ENCODE measurements at regions of chr1 and their contacts with region 1.

Region 1: DNA sequence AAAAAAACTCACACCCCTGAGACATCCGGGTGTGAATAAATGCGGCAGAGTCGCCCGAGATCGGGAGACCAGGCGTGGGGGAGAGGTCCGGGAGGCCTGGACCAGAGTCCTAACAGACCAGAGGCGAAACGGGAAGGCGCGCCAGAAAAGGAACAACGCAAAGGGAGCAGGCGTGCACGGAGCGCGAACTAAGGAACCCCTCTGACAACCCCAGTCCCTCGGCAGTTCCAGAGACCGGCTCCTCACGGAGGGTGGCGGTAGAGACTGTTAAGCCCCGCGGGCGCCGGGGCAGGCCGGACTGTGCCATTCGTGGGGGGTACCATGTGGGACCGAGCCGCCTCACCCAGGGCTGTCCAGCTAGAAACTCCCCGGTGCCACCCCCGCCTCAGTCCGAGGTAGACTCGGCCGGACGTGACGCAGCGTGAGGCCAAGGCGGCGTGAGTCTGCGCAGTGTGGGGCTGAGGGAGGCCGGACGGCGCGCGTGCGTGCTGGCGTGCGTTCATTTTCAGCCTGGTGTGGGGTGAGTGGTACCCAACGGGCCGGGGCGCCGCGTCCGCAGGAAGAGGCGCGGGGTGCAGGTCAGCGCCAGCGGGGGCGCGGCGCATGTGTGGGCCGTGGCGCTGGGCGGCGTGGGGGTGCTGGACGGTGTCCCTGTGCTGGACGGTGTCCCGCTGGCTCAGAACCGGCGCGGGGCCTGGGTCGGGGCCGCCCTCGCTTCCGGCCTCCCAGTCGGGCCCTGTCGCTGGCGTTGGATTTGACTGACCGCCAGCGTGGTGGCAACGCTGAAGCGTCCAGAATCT is at the start of gene PARK7:
- DNase-seq: peak; percentile 99 to 100 (median 100)
- ATAC-seq: peak; percentile 95
- H3K4me3 ChIP-seq: peak within 1 kb of the TSS; percentile 60 to 87
- H3K4me3 Mint-ChIP-seq: peak within 1 kb of the TSS; percentile 99
- H3K27ac ChIP-seq: peak within 1 kb of the TSS; percentile 76 to 92
- H3K27ac Mint-ChIP-seq: peak within 1 kb of the TSS; percentile 100
- H3K4me1 ChIP-seq: peaks cover 51% of the 10 kb centered on the region
- H3K4me1 Mint-ChIP-seq: peaks cover 62% of the 10 kb centered on the region
- H3K27me3 ChIP-seq: no peaks in the 10 kb centered on the region
- H3K27me3 Mint-ChIP-seq: no peaks in the 10 kb centered on the region
- CTCF ChIP-seq: peak; percentile 49
- total RNA-seq, gene PARK7: 67.9 to 70.0 TPM

Region 2: GRCh38 chr1:7783826-7784491 is 177.5 kb before region 1 on chr1 and contains the start of gene PER3:
- CTCF ChIA-PET with region 1: no interaction called
- POLR2A ChIA-PET with region 1: no interaction called
- intact Hi-C with region 1: loop called (anchors 2 to 10 kb)
- DNase-seq: peak; percentile 82 to 96 (median 89)
- ATAC-seq: peak; percentile 88
- H3K4me3 ChIP-seq: peak within 1 kb of the TSS; percentile 55 to 68
- H3K4me3 Mint-ChIP-seq: peak within 1 kb of the TSS; percentile 72
- H3K27ac ChIP-seq: peak within 1 kb of the TSS; percentile 76 to 88
- H3K27ac Mint-ChIP-seq: peak within 1 kb of the TSS; percentile 60
- H3K4me1 ChIP-seq: peaks cover 27% of the 10 kb centered on the region
- H3K4me1 Mint-ChIP-seq: peaks cover 30% of the 10 kb centered on the region
- H3K27me3 ChIP-seq: no peaks in the 10 kb centered on the region
- H3K27me3 Mint-ChIP-seq: no peaks in the 10 kb centered on the region
- CTCF ChIP-seq: no peak
- total RNA-seq, gene PER3: 8.7 to 10.2 TPM

Region 3: DNA sequence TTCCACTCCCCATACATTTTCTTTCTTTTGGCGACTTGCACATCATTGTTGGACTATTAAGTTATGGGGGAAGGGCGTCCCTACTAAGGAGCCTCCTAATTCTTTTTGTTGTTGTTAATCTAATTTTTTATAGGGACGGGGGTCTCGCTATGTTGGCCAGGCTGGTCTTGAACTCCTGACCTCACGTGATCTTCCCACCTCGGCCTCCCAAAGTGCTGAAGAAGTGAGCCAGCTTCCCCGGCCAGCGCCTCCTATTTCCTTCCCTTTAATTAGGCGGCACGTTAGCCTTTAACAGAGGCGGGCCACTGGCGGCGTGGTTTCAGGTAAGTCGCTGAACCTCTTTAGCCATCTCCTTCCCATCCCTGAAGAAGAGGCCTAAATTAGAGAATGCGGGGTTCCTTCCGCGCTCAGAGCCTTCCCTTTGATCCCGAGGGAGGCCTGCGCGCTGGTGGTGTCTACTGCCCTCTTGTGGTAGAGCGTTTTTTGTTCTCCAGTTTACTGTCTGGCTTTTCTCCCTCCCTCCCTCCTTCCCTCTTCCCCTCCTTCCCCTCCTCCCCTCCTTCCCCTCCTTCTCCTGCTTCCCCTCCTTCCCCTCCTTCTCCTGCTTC is 58.8 kb before region 1 on chr1:
- CTCF ChIA-PET with region 1: interaction called, 4 read pairs
- POLR2A ChIA-PET with region 1: no interaction called
- intact Hi-C with region 1: loop called in 1 of 2 experiments (anchors 5 kb)
- DNase-seq: peak in 8 of 9 experiments; percentile 31 to 84 (median 60)
- ATAC-seq: peak; percentile 69
- H3K4me3 ChIP-seq: peak overlapping the region; percentile 39 to 46
- H3K4me3 Mint-ChIP-seq: peak overlapping the region; percentile 65
- H3K27ac ChIP-seq: no peak overlapping the region
- H3K27ac Mint-ChIP-seq: no peak overlapping the region
- H3K4me1 ChIP-seq: peaks cover 4% of the 10 kb centered on the region
- H3K4me1 Mint-ChIP-seq: peaks cover 9% of the 10 kb centered on the region
- H3K27me3 ChIP-seq: no peaks in the 10 kb centered on the region
- H3K27me3 Mint-ChIP-seq: no peaks in the 10 kb centered on the region
- CTCF ChIP-seq: peak; percentile 53

Region 4: DNA sequence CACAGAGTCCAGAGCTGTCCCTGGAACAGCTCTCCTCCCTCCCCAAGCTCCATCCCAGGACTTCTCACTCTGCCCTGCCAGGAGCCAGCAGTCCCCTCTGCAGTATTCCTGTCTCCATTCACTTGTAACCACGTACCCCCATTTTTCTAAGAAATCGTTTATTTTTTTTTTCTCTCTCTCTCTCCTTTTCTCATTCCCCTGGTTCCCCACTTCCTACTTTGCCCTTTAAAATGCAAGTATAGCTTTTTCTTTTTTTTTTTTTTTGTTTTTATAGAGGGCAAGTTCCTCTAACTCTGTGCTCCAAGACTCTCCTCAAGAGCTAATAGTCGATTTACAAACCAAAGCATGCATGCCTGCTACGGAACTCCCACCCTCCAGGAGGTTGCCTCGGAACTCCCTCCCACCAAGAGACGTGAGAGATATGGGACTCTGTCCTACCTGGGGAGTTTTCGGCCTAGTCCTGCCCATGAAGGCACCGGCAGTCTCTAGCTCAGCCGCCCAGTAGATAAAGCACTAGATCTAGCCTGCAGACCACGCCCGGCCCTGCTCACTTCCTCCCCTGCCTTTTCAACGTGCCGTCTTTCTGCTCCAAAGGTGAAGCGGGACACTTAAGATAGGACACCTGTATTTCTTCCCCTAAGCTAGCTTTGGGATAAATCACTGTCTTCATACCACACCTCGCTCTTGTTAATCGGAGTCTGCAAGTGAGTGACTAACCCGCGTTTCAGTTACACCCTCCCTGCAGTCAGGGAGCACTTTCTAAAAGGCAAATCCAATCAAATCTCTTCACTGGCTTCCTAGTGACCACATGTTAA is 48.5 kb before region 1 on chr1:
- CTCF ChIA-PET with region 1: no interaction called
- POLR2A ChIA-PET with region 1: interaction called, 3 read pairs
- intact Hi-C with region 1: loop called in 1 of 2 experiments (anchors 10 kb)
- DNase-seq: peak in 2 of 9 experiments; percentile 20 to 25
- ATAC-seq: no peak
- H3K4me3 ChIP-seq: peak overlapping the region in 1 of 2 experiments; percentile 34
- H3K4me3 Mint-ChIP-seq: peak overlapping the region; percentile 74
- H3K27ac ChIP-seq: peak overlapping the region in 1 of 2 experiments; percentile 23
- H3K27ac Mint-ChIP-seq: peak overlapping the region; percentile 63
- H3K4me1 ChIP-seq: peaks cover 13% of the 10 kb centered on the region
- H3K4me1 Mint-ChIP-seq: peaks cover 31% of the 10 kb centered on the region
- H3K27me3 ChIP-seq: no peaks in the 10 kb centered on the region
- H3K27me3 Mint-ChIP-seq: no peaks in the 10 kb centered on the region
- CTCF ChIP-seq: no peak

Region 5: DNA sequence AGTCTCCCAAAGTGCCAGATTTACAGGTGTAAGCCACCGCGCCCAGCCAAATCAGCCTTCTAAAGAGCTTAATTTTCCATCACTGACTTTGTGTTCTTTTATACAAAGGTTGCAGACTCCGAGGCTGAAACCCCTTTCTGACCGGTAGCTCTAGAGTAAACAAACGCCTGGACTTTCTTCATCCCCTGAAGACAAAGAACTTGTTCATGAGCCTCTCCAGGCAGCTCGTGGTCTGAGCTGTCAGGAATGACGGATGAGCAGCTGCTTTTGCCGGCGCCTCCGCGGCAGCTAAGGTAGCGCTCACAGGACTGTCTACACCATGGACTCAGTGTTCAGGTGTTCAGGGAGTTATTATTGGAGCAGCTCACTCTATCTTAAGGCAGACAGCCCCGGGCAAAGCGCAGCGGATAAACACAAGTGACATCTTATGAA is 193.2 kb after region 1 on chr1:
- CTCF ChIA-PET with region 1: no interaction called
- POLR2A ChIA-PET with region 1: no interaction called
- intact Hi-C with region 1: loop called in 1 of 2 experiments (anchors 5 kb)
- DNase-seq: no peak
- ATAC-seq: no peak
- H3K4me3 ChIP-seq: no peak overlapping the region
- H3K4me3 Mint-ChIP-seq: no peak overlapping the region
- H3K27ac ChIP-seq: no peak overlapping the region
- H3K27ac Mint-ChIP-seq: no peak overlapping the region
- H3K4me1 ChIP-seq: peaks cover 44% of the 10 kb centered on the region
- H3K4me1 Mint-ChIP-seq: peaks cover 45% of the 10 kb centered on the region
- H3K27me3 ChIP-seq: no peaks in the 10 kb centered on the region
- H3K27me3 Mint-ChIP-seq: peaks cover 4% of the 10 kb centered on the region
- CTCF ChIP-seq: no peak

Region 6: DNA sequence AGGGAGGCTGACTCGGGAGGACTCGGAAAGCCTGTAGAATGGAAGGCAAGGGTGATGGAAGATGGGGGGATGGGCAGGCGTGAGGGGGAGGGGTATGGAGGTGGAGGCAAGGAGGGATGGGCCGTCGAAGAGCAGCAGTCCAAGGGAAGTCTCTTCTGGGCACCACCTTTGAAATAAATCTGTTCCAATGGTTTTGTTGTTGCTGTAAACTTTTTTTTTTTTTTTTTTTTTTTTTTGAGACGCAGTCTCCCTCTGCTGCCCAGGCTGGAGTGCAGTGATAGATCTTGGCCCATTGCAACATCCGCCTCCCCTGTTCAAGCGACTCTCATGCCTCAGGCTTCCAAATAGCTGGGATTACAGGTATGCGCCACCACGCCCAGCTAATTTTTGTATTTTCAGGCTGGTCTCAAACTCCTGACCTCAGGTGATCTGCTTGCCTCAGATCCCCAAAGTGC is 277.5 kb after region 1 on chr1:
- CTCF ChIA-PET with region 1: no interaction called
- POLR2A ChIA-PET with region 1: no interaction called
- intact Hi-C with region 1: no loop called
- DNase-seq: no peak
- ATAC-seq: no peak
- H3K4me3 ChIP-seq: no peak overlapping the region
- H3K4me3 Mint-ChIP-seq: no peak overlapping the region
- H3K27ac ChIP-seq: no peak overlapping the region
- H3K27ac Mint-ChIP-seq: no peak overlapping the region
- H3K4me1 ChIP-seq: peaks cover 3% of the 10 kb centered on the region
- H3K4me1 Mint-ChIP-seq: peaks cover 4% of the 10 kb centered on the region
- H3K27me3 ChIP-seq: no peaks in the 10 kb centered on the region
- H3K27me3 Mint-ChIP-seq: peaks cover 17% of the 10 kb centered on the region
- CTCF ChIP-seq: no peak

Region 7: DNA sequence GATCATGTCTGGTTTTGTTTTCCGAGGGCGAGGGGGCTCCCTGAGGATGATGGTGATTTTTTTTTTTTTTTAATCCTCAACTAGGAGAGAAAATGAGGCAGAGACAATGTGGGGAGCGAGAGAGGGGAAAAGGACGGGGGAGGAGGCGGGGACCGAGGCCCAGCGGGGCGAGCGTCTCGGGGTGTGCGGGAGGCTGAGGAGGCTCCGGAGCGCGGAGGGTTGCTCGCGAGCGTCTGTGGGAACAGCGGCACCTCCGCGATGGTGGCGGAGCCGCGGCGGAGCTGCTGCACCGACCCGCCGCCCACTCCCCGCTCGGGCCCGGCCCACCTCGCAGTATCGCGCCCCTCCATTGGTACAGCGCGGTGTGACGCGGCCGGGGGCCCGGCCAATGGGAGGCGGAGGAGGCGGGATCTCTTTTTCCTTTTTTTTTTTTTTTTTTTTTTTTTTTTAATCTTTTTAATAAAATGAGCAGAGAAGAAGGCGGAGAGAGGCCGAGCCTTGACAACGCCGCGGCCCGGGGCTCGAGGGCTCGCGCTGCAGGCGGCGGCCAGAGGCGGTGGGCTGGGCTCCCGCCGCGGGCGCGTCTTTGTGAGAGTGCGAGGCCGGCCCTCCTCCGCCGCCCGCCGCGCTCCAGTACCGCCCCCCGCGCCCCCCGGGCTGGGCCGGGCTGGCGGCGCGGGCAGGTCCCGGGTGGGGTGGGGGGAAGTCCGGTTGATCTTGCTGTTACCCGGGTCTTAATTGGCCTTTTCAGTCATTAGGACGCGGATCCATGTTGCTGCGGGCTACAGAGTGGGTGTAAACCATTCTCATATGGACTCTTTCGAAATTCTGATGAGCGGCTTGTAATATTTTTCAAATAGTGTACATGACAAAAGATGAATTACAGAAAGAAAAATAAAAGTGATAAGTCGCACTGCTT is 856.2 kb after region 1 on chr1 and contains the start of gene RERE:
- CTCF ChIA-PET with region 1: no interaction called
- POLR2A ChIA-PET with region 1: no interaction called
- intact Hi-C with region 1: loop called in 1 of 2 experiments (anchors 5 kb)
- DNase-seq: peak; percentile 91 to 99 (median 97)
- ATAC-seq: peak; percentile 96
- H3K4me3 ChIP-seq: peak within 1 kb of the TSS; percentile 84 to 98
- H3K4me3 Mint-ChIP-seq: peak within 1 kb of the TSS; percentile 92
- H3K27ac ChIP-seq: peak within 1 kb of the TSS; percentile 85 to 90
- H3K27ac Mint-ChIP-seq: peak within 1 kb of the TSS; percentile 90
- H3K4me1 ChIP-seq: peaks cover 24% of the 10 kb centered on the region
- H3K4me1 Mint-ChIP-seq: peaks cover 41% of the 10 kb centered on the region
- H3K27me3 ChIP-seq: no peaks in the 10 kb centered on the region
- H3K27me3 Mint-ChIP-seq: no peaks in the 10 kb centered on the region
- CTCF ChIP-seq: no peak
- total RNA-seq, gene RERE: 62.8 to 68.4 TPM

Region 8: DNA sequence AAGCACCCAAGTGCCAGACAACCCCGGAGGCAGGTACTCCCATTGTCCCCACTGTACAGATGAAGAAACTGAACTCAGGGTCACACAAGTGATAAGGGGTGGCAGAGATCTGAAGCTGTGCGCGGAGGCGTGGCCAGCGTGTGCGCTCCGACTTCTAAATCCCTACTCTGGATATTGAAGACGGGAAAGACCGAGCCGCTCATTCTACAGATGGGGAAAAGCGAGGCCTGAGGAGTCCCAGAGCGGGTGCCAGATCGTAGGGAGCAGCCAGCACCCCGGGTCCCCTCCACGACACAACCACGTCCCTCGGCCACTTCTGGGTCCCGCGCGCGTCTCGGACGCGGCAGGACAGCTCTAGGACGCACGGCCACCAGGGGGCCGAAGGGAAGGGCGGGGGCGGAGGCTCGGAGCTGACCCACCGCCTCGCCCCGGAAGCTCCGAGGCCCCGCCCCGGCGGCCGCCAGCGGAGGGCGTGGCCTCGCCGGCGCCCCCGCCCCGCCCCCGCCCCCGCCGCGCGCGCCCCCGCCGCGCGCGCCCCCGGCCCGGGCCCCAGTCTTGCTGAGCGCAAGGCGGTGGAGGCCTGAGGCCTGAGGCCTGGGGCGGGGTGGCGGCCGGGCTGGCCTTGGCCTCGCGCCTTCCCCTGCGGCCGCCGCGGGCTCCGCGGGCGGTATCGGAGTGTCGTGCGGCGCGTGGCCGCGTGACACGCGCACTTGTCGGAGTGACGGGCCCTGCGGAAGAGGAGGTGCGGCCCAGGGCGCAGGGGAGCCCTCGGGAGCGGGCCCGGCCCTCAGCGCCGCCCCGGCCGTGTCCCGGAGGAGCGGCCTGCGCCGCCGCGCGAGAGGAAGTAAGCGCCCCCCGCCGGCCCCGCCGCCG is 1273.0 kb after region 1 on chr1 and contains the start of gene H6PD:
- CTCF ChIA-PET with region 1: no interaction called
- POLR2A ChIA-PET with region 1: no interaction called
- intact Hi-C with region 1: loop called in 1 of 2 experiments (anchors 10 kb)
- DNase-seq: peak; percentile 43 to 89 (median 71)
- ATAC-seq: peak; percentile 76
- H3K4me3 ChIP-seq: peak within 1 kb of the TSS; percentile 71 to 84
- H3K4me3 Mint-ChIP-seq: peak within 1 kb of the TSS; percentile 96
- H3K27ac ChIP-seq: peak within 1 kb of the TSS; percentile 64 to 84
- H3K27ac Mint-ChIP-seq: peak within 1 kb of the TSS; percentile 96
- H3K4me1 ChIP-seq: peaks cover 26% of the 10 kb centered on the region
- H3K4me1 Mint-ChIP-seq: peaks cover 38% of the 10 kb centered on the region
- H3K27me3 ChIP-seq: no peaks in the 10 kb centered on the region
- H3K27me3 Mint-ChIP-seq: no peaks in the 10 kb centered on the region
- CTCF ChIP-seq: peak; percentile 22
- total RNA-seq, gene H6PD: 11.1 to 11.2 TPM